ENCODE measurements at regions of chr3 and their contacts with region 1.

Region 1: DNA sequence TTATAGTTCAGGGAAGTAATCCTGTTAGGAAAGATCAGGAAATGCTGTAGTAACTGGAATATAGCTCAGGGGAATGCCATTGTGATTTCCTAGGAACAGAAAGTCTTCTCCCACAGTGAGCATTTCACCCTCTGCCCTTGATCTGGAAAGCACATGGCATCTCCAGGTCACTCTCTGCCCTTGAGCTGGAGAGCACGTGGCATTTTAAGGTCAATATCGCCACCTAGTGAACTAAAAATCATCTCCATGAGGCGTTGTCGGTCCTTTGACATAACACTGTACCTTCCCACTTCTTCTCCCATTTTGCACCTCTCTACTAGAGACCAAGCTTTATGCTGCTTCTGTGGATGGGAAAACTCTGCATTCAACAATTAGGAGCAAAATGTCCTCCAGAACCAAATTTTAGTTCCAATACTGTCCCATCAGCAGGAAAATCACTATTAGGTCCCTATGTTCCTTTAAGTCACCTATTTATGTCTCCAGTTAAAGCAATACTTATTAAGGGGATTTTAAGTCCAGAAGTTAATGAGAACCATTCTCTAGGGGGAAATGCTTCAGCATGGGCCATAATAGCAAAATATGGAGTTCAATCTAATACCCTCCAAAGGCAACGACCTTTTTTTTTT is 54.7 kb upstream of the GK5 start:
- DNase-seq: peak; percentile 49
- ATAC-seq: peak; percentile 96
- H3K4me3 Mint-ChIP-seq: no peak overlapping the region
- H3K27ac Mint-ChIP-seq: peak overlapping the region; percentile 24
- H3K4me1 Mint-ChIP-seq: peaks cover 7% of the 10 kb centered on the region
- H3K27me3 Mint-ChIP-seq: no peaks in the 10 kb centered on the region

Region 2: GRCh38 chr3:141575879-141576743 is 704.0 kb before region 1 on chr3:
- CTCF ChIA-PET with region 1: no interaction called
- POLR2A ChIA-PET with region 1: no interaction called
- intact Hi-C with region 1: loop called in 1 of 2 experiments (anchors 10 kb)
- DNase-seq: no peak
- ATAC-seq: peak; percentile 64
- H3K4me3 Mint-ChIP-seq: peak overlapping the region; percentile 14
- H3K27ac Mint-ChIP-seq: peak overlapping the region; percentile 70
- H3K4me1 Mint-ChIP-seq: peaks cover 12% of the 10 kb centered on the region
- H3K27me3 Mint-ChIP-seq: no peaks in the 10 kb centered on the region

Region 3: GRCh38 chr3:141959921-141960554 is 320.0 kb before region 1 on chr3:
- CTCF ChIA-PET with region 1: interaction called, 7 read pairs
- POLR2A ChIA-PET with region 1: no interaction called
- intact Hi-C with region 1: loop called (anchors 1 kb)
- DNase-seq: no peak
- ATAC-seq: no peak
- H3K4me3 Mint-ChIP-seq: no peak overlapping the region
- H3K27ac Mint-ChIP-seq: no peak overlapping the region
- H3K4me1 Mint-ChIP-seq: peaks cover 3% of the 10 kb centered on the region
- H3K27me3 Mint-ChIP-seq: no peaks in the 10 kb centered on the region

Region 4: DNA sequence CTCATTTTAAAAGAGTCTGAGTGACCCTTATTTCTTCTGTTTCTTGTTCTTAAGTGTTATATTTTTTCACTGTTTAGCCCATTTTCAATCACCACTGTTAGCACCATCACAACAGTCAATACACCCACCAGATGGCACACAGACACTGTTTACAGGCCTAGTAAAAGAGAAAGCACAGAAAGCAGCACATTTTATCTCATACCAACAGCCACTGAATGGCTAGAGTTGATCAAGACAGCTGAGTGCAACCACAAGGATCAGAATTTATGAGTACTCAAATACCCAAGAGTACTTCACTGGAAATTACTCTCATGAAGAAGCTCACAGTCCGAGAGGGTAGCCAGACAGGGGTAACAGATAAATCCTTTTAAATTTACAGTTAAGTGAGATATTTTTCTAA is 257.7 kb before region 1 on chr3:
- CTCF ChIA-PET with region 1: interaction called, 3 read pairs
- POLR2A ChIA-PET with region 1: no interaction called
- intact Hi-C with region 1: loop called (anchors 5 kb)
- DNase-seq: peak; percentile 32
- ATAC-seq: peak; percentile 90
- H3K4me3 Mint-ChIP-seq: no peak overlapping the region
- H3K27ac Mint-ChIP-seq: peak overlapping the region; percentile 9
- H3K4me1 Mint-ChIP-seq: peaks cover 37% of the 10 kb centered on the region
- H3K27me3 Mint-ChIP-seq: no peaks in the 10 kb centered on the region

Region 5: DNA sequence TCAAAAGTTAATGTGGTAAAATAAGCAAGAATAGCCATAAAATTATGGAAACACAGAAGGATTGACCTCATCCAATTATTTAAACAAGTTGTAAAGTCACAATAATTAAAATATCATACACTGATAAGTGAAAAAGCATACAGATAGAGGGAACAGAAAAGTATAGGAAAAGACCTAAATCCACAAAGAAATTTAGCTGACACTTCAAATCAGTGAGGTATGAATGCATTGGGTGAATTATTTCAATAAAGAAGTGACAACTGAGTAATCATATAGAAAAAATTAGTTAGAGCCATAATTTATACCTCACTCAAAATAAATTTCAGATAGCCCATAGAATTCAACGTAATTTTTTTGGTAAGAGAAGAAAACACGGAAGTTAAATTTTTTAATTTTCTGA is 155.8 kb before region 1 on chr3:
- CTCF ChIA-PET with region 1: interaction called, 16 read pairs
- POLR2A ChIA-PET with region 1: no interaction called
- intact Hi-C with region 1: loop called (anchors 1 kb)
- DNase-seq: no peak
- ATAC-seq: no peak
- H3K4me3 Mint-ChIP-seq: no peak overlapping the region
- H3K27ac Mint-ChIP-seq: no peak overlapping the region
- H3K4me1 Mint-ChIP-seq: no peaks in the 10 kb centered on the region
- H3K27me3 Mint-ChIP-seq: no peaks in the 10 kb centered on the region

Region 6: GRCh38 chr3:142129516-142130171 is 150.4 kb before region 1 on chr3:
- CTCF ChIA-PET with region 1: interaction called, 16 read pairs
- POLR2A ChIA-PET with region 1: no interaction called
- intact Hi-C with region 1: loop called (anchors 1 kb)
- DNase-seq: no peak
- ATAC-seq: no peak
- H3K4me3 Mint-ChIP-seq: no peak overlapping the region
- H3K27ac Mint-ChIP-seq: no peak overlapping the region
- H3K4me1 Mint-ChIP-seq: no peaks in the 10 kb centered on the region
- H3K27me3 Mint-ChIP-seq: no peaks in the 10 kb centered on the region

Region 7: GRCh38 chr3:142165194-142165593 is 114.9 kb before region 1 on chr3:
- CTCF ChIA-PET with region 1: no interaction called
- POLR2A ChIA-PET with region 1: no interaction called
- intact Hi-C with region 1: no loop called
- DNase-seq: no peak
- ATAC-seq: no peak
- H3K4me3 Mint-ChIP-seq: no peak overlapping the region
- H3K27ac Mint-ChIP-seq: no peak overlapping the region
- H3K4me1 Mint-ChIP-seq: no peaks in the 10 kb centered on the region
- H3K27me3 Mint-ChIP-seq: no peaks in the 10 kb centered on the region

Region 8: GRCh38 chr3:142180761-142181362 is 99.2 kb before region 1 on chr3:
- CTCF ChIA-PET with region 1: interaction called, 19 read pairs
- POLR2A ChIA-PET with region 1: no interaction called
- intact Hi-C with region 1: no loop called
- DNase-seq: peak; percentile 42
- ATAC-seq: no peak
- H3K4me3 Mint-ChIP-seq: no peak overlapping the region
- H3K27ac Mint-ChIP-seq: no peak overlapping the region
- H3K4me1 Mint-ChIP-seq: no peaks in the 10 kb centered on the region
- H3K27me3 Mint-ChIP-seq: no peaks in the 10 kb centered on the region